Activated naive CD8-positive, alpha-beta T cell treated with anti-CD3 and anti-CD28 coated beads, Interleukin-2, amount 10 ng/mL, durations not matched to agents 7 days and 5 days (primary cell): ENCODE measurements at regions of chr9 and their contacts with region 1.

Region 1: GRCh38 chr9:89483592-89484522 is 14.1 kb downstream of the SEMA4D start:
- DNase-seq: peak; percentile 77
- ATAC-seq: peak; percentile 74
- H3K4me3 Mint-ChIP-seq: peak overlapping the region; percentile 86
- H3K27ac Mint-ChIP-seq: peak overlapping the region; percentile 93
- H3K4me1 Mint-ChIP-seq: peaks cover 82% of the 10 kb centered on the region
- H3K27me3 Mint-ChIP-seq: no peaks in the 10 kb centered on the region

Region 2: DNA sequence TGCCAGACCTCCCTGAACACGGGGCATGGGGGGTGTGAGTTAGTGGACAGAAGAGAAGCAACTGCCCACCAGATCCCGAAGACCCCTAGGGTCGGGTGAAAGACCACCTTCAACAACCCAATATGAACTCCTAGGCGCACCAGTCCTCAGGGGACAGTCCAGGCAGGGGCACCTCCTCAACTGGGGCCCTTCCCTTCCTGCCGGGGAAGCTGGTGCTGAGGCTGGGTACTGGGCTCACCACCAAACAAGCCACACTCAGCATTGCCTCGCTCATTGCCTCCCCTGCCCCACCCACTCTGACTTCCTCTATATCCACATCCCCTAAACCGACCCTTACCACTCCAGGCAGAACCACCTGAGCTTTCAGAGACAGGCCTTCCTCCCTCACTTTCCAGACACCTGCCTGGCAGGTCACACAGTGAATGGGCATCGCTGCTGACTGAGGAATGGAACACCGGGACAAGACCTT is 28.5 kb before region 1 on chr9:
- POLR2A ChIA-PET with region 1: interaction called, 17 read pairs
- DNase-seq: no peak
- ATAC-seq: peak; percentile 62
- H3K4me3 Mint-ChIP-seq: peak overlapping the region; percentile 69
- H3K27ac Mint-ChIP-seq: peak overlapping the region; percentile 74
- H3K4me1 Mint-ChIP-seq: peaks cover 84% of the 10 kb centered on the region
- H3K27me3 Mint-ChIP-seq: no peaks in the 10 kb centered on the region

Region 3: DNA sequence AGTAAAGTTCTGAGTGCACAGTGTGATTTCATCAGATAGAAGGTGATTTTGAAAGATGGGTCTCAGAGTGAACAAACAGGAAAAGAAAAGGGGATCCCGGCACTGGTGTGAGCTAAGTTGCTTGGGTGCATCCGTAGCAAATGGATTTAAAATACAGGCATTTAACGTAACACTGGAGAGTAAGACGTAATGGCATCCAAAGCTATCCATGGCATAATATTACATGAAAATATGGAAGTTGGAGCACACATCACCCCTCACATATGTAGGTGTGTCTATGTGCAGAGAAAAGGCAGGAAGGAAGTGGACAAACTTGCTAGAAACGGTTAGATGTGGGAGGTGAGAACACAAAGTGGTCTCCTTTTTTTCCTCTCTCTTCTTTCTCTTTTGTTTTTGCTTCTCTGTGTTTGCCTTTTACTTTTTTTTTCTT is 52.3 kb after region 1 on chr9:
- POLR2A ChIA-PET with region 1: interaction called, 12 read pairs
- DNase-seq: no peak
- ATAC-seq: peak; percentile 75
- H3K4me3 Mint-ChIP-seq: peak overlapping the region; percentile 76
- H3K27ac Mint-ChIP-seq: peak overlapping the region; percentile 88
- H3K4me1 Mint-ChIP-seq: peaks cover 82% of the 10 kb centered on the region
- H3K27me3 Mint-ChIP-seq: no peaks in the 10 kb centered on the region